ENCODE measurements at regions of chr16 and their contacts with region 1.

Region 1: DNA sequence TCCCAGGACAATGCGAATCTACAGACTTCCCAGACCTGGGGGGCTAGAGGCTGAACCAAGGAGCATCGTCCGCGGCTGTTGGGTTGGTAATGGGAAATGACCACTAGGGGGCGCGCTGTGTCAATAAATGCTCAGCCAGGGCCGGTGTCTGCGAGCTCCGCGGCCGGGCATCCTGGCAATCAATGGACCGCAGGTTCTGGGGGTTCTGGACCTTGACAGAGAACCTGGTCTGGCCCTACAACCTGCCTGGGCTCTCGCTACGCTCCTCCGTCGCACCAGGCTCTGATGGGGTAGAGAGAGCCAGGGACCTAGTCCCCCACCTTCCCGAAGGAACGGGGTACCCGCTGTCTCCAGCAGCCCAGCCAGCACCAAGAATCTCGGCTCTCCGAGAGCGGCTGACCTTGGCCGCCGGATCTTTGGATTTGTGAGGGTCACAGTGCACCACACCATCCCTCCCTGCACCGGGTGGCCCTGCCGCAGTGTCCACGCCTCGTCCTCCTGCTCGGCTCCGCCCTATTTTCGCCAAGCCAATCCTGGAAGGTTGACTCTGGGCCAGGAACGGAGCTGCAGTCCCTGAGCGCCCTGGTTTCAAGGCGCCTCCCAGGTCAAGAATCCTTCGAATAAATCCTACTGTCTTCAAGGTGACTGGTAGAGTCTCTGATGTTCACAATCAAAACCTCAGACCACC is 20.4 kb upstream of the BEAN1 start:
- DNase-seq: peak; percentile 91
- H3K4me3 ChIP-seq: peak overlapping the region; percentile 62
- H3K27ac ChIP-seq: no peak overlapping the region
- H3K4me1 ChIP-seq: peaks cover 5% of the 10 kb centered on the region
- H3K27me3 ChIP-seq: no peaks in the 10 kb centered on the region
- CTCF ChIP-seq: peak; percentile 84

Region 2: GRCh38 chr16:66344533-66345145 is 62.0 kb before region 1 on chr16:
- intact Hi-C with region 1: no loop called
- DNase-seq: peak; percentile 45
- H3K4me3 ChIP-seq: no peak overlapping the region
- H3K27ac ChIP-seq: no peak overlapping the region
- H3K4me1 ChIP-seq: no peaks in the 10 kb centered on the region
- H3K27me3 ChIP-seq: no peaks in the 10 kb centered on the region
- CTCF ChIP-seq: peak; percentile 72

Region 3: DNA sequence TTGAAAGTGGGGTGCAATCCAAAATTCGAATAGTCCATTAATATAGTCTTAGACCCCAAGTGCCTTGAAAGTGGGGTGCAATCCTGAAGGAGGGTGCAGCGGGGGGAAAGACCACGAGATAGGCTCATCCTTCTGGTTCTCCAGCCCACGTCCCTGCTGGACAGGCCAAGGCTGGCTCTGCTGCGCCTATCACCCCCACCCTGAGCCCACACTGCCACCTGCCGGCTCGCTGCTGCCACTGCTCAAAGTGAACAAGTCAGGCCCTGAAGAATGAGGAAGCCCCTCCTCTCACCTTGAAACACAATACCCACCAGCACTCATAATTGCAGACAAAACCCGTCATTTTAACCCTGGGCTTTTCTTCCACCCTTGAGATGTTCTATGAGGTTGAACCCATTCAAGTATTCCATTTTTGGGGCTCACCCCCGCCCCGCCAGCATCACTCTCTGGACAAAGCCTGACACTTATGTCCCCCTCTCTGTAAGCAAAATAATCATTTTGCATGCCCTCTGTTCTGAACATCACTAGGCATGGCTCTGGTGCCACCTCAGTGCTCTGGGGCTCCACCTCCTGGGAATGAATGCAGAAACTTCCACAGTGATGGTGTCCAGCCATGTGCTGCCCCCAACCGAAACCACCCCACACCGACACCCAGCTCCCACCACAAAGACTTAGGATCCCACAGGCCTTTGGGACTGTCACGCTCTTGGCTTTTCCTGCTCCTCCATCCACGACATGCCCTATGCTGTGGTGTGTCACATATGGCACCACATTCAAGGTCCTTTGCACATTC is 77.2 kb after region 1 on chr16:
- intact Hi-C with region 1: loop called (anchors 2 kb)
- DNase-seq: peak; percentile 81
- H3K4me3 ChIP-seq: no peak overlapping the region
- H3K27ac ChIP-seq: no peak overlapping the region
- H3K4me1 ChIP-seq: no peaks in the 10 kb centered on the region
- H3K27me3 ChIP-seq: no peaks in the 10 kb centered on the region
- CTCF ChIP-seq: peak; percentile 84

Region 4: GRCh38 chr16:66858740-66859396 is 452.2 kb after region 1 on chr16:
- intact Hi-C with region 1: loop called (anchors 10 kb)
- DNase-seq: peak; percentile 34
- H3K4me3 ChIP-seq: no peak overlapping the region
- H3K27ac ChIP-seq: no peak overlapping the region
- H3K4me1 ChIP-seq: no peaks in the 10 kb centered on the region
- H3K27me3 ChIP-seq: no peaks in the 10 kb centered on the region
- CTCF ChIP-seq: no peak